Mammary epithelial cell (primary cell): ENCODE measurements at regions of chr4 and their contacts with region 1.

Region 1: GRCh38 chr4:102344954-102345794 is at the start of gene SLC39A8:
- DNase-seq: peak; percentile 80
- H3K4me3 ChIP-seq: peak within 1 kb of the TSS; percentile 76 to 91 (median 76)
- H3K27ac ChIP-seq: peak within 1 kb of the TSS; percentile 76
- H3K4me1 ChIP-seq: peaks cover 26% of the 10 kb centered on the region
- H3K27me3 ChIP-seq: no peaks in the 10 kb centered on the region
- CTCF ChIP-seq: peak; percentile 40 to 86
- total RNA-seq, gene SLC39A8: 8.9 to 12.5 TPM

Region 2: DNA sequence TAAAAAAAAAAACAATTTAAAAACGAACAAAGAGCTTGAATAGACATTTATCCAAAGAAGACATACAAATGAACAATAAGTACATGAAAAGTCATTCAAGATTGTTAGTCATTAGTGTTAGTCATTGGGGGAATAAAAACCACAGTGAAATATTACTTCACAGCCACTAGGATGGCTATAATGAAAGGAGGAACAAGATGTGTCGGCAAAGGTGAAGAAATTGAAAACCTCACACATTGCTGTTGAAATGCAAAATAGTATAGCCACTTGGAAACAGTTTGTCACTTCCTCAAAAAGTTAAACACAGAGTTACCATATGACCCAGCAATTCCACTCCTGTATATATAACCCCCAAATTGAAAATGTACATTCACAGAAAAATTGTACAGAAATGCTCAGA is 45.3 kb after region 1 on chr4:
- CTCF ChIA-PET with region 1: no interaction called
- dilution Hi-C with region 1: no loop called
- in situ Hi-C with region 1: no loop called
- intact Hi-C with region 1: loop called (anchors 2 kb)
- DNase-seq: peak; percentile 90
- H3K4me3 ChIP-seq: no peak overlapping the region
- H3K27ac ChIP-seq: peak overlapping the region; percentile 69
- H3K4me1 ChIP-seq: peaks cover 24% of the 10 kb centered on the region
- H3K27me3 ChIP-seq: no peaks in the 10 kb centered on the region
- CTCF ChIP-seq: peak in 1 of 2 donors; percentile 29

Region 3: DNA sequence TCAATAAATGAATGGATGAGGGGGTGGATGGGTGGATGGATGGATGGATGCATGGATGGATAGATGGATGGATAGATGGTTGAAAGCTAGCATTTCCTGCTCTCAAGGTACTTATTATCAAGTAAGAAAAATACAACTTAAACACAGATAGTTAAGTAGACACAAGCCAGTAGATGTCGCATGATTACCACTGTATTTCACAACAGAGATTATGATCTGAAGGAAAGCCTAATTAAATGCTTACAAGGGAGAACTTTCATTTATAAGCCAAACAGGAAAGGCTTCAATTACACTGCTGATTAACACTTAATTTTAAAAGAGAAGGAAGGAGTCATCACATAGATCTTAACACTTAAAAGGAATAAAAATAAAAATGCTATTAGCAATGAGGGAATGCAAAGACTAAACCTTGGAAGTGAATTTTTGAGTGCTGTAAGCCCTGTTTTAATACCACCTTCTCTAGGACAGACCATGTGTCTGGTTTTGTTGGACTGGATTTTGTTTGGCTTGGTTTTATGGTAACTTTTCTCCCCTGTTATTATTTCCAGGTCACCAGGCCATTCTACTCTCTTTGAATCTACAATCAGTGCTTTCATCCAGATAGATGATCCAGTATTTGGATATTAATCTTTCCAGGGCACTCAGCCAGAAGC is 75.5 kb after region 1 on chr4:
- CTCF ChIA-PET with region 1: no interaction called
- dilution Hi-C with region 1: no loop called
- in situ Hi-C with region 1: loop called in 1 of 2 experiments (anchors 10 kb)
- intact Hi-C with region 1: no loop called
- DNase-seq: peak; percentile 39
- H3K4me3 ChIP-seq: no peak overlapping the region
- H3K27ac ChIP-seq: no peak overlapping the region
- H3K4me1 ChIP-seq: peaks cover 7% of the 10 kb centered on the region
- H3K27me3 ChIP-seq: no peaks in the 10 kb centered on the region
- CTCF ChIP-seq: peak; percentile 27 to 42

Region 4: DNA sequence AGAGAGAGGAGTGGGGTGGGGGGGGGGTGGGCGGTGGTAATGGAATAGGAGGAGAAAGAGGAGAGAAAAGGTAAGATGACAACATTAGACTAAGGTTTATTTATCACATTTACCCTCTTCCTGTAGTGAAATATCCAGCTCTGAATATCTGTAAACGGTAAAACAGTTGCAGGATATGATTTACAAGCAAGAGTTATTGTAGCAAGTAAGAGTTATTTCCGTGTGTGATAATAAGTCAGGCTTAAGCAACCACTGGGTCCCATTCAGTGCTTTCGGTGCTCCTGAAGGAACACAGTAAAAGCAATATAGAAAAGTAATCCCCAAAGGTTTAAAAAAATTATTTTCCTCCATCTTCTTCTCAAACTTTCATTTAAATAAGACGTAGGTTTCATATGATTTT is 312.0 kb after region 1 on chr4:
- CTCF ChIA-PET with region 1: no interaction called
- dilution Hi-C with region 1: no loop called
- in situ Hi-C with region 1: no loop called
- intact Hi-C with region 1: no loop called
- DNase-seq: no peak
- H3K4me3 ChIP-seq: no peak overlapping the region
- H3K27ac ChIP-seq: no peak overlapping the region
- H3K4me1 ChIP-seq: no peaks in the 10 kb centered on the region
- H3K27me3 ChIP-seq: no peaks in the 10 kb centered on the region
- CTCF ChIP-seq: no peak